CD14-positive monocyte (primary cell): ENCODE measurements at regions of chr17 and their contacts with region 1.

Region 1: DNA sequence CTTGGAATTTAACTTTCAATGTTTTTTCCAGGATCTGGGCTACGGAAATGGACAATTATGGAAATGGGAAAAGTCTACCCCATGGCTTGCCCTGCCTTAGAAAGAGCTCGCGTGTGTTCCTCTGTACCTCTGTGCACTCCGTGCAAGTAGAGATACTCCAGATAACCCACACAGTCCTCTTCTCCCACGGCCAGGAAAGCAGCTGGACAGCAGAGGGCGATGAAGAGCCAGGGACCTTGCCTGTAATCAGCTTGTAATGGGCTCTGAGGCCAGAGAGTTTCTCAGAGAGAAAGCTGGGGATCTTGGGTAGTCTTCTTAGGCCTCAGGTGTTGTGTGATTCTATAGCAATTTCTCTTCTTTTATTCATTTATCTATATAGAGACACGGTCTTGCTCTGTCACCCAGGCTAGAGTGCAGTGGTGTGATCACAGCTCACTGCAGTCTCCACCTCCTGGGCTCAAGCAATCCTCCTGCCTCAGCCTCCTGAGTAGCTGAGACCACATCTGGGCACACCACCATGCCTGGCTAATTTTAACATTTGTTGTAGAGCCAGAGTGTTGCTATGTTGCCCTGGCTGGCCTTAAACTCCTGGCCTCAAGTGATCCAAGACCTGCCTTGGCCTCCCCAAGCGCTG is 2.4 kb upstream of the SOCS7 start:
- DNase-seq: peak; percentile 67 to 72 (median 72)
- H3K4me3 ChIP-seq: no peak overlapping the region
- H3K4me3 Mint-ChIP-seq: no peak overlapping the region
- H3K27ac ChIP-seq: no peak overlapping the region
- H3K27ac Mint-ChIP-seq: peak overlapping the region in 2 of 7 donors; percentile 51 to 81
- H3K4me1 ChIP-seq: peaks cover 17 to 25% of the 10 kb centered on the region in 2 donors
- H3K4me1 Mint-ChIP-seq: peaks cover 22% of the 10 kb centered on the region
- H3K27me3 ChIP-seq: no peaks in the 10 kb centered on the region
- H3K27me3 Mint-ChIP-seq: peaks cover 0 to 2% (median 1%) of the 10 kb centered on the region in 3 donors
- CTCF ChIP-seq: peak; percentile 85

Region 2: GRCh38 chr17:38315497-38315896 is 33.7 kb before region 1 on chr17:
- intact Hi-C with region 1: no loop called
- DNase-seq: no peak
- H3K4me3 ChIP-seq: no peak overlapping the region
- H3K4me3 Mint-ChIP-seq: no peak overlapping the region
- H3K27ac ChIP-seq: no peak overlapping the region
- H3K27ac Mint-ChIP-seq: no peak overlapping the region
- H3K4me1 ChIP-seq: peaks cover 0 to 6% of the 10 kb centered on the region in 2 donors
- H3K4me1 Mint-ChIP-seq: peaks cover 5% of the 10 kb centered on the region
- H3K27me3 ChIP-seq: no peaks in the 10 kb centered on the region
- H3K27me3 Mint-ChIP-seq: no peaks in the 10 kb centered on the region
- CTCF ChIP-seq: no peak

Region 3: GRCh38 chr17:38415250-38416194 is 66.3 kb after region 1 on chr17:
- intact Hi-C with region 1: loop called (anchors 1 kb)
- DNase-seq: no peak
- H3K4me3 ChIP-seq: peak overlapping the region in 1 of 3 experiments; percentile 32
- H3K4me3 Mint-ChIP-seq: peak overlapping the region in 1 of 2 donors; percentile 62
- H3K27ac ChIP-seq: no peak overlapping the region
- H3K27ac Mint-ChIP-seq: peak overlapping the region in 2 of 7 donors; percentile 35 to 41
- H3K4me1 ChIP-seq: peaks cover 12 to 13% of the 10 kb centered on the region in 2 donors
- H3K4me1 Mint-ChIP-seq: peaks cover 18% of the 10 kb centered on the region
- H3K27me3 ChIP-seq: peaks cover 13 to 26% of the 10 kb centered on the region in 2 donors
- H3K27me3 Mint-ChIP-seq: peaks cover 26 to 39% (median 29%) of the 10 kb centered on the region in 3 donors
- CTCF ChIP-seq: no peak

Region 4: DNA sequence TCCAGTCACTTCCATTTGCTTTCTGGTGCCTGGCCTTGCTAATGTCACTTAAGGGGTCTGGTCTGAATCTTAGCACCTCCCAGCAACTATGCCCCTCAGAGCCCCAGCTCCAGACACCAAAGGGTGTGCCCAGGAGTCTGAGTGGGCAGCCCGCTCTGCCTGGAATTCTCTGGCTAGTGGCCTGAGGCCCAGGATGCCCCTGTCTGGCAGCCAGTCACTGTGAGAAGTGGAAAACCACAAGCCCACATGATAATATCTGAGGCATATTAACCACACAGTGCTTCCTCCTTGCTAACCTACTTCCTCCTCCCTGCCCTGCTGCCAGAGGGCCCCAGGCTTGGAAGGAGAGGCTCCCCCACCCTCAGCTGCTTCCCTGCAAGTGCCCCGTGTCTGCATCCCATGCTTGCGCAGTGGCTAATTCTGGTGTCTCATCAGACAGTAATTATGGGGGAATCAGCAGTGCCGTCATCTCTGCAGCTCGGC is 242.6 kb after region 1 on chr17:
- intact Hi-C with region 1: no loop called
- DNase-seq: peak; percentile 64 to 77 (median 67)
- H3K4me3 ChIP-seq: peak overlapping the region in 1 of 3 experiments; percentile 47
- H3K4me3 Mint-ChIP-seq: peak overlapping the region in 1 of 2 donors; percentile 82
- H3K27ac ChIP-seq: peak overlapping the region in 1 of 2 donors; percentile 32
- H3K27ac Mint-ChIP-seq: peak overlapping the region; percentile 72 to 94 (median 83)
- H3K4me1 ChIP-seq: peaks cover 19 to 32% of the 10 kb centered on the region in 2 donors
- H3K4me1 Mint-ChIP-seq: peaks cover 32% of the 10 kb centered on the region
- H3K27me3 ChIP-seq: peaks cover 76 to 89% of the 10 kb centered on the region in 2 donors
- H3K27me3 Mint-ChIP-seq: peaks cover 84 to 99% (median 99%) of the 10 kb centered on the region in 3 donors
- CTCF ChIP-seq: no peak